Lower leg skin (tissue), 4 donors: ENCODE measurements at regions of chr14 and their contacts with region 1.

Region 1: GRCh38 chr14:100640471-100641273 is 53.5 kb upstream of the BEGAIN start:
- DNase-seq: no peak
- H3K4me3 ChIP-seq: no peak overlapping the region
- CTCF ChIP-seq: no peak
- POLR2A ChIP-seq: no peak

Region 2: GRCh38 chr14:99595034-99595433 is 1045.6 kb before region 1 on chr14:
- intact Hi-C with region 1: no loop called
- DNase-seq: no peak
- H3K4me3 ChIP-seq: no peak overlapping the region
- CTCF ChIP-seq: no peak
- POLR2A ChIP-seq: no peak

Region 3: GRCh38 chr14:100440187-100440631 is 200.5 kb before region 1 on chr14:
- intact Hi-C with region 1: loop called (anchors 5 kb)
- DNase-seq: peak; percentile 66 to 90
- H3K4me3 ChIP-seq: no peak overlapping the region
- CTCF ChIP-seq: no peak
- POLR2A ChIP-seq: no peak

Region 4: GRCh38 chr14:100673036-100673806 is 32.5 kb after region 1 on chr14:
- intact Hi-C with region 1: no loop called
- DNase-seq: no peak
- H3K4me3 ChIP-seq: no peak overlapping the region
- CTCF ChIP-seq: no peak
- POLR2A ChIP-seq: no peak